ENCODE measurements at regions of chr3 and their contacts with region 1.

Region 1: GRCh38 chr3:170499565-170500156 is 81.0 kb downstream of the CLDN11 start:
- DNase-seq: peak; percentile 47
- ATAC-seq: peak; percentile 89
- H3K4me3 Mint-ChIP-seq: no peak overlapping the region
- H3K27ac Mint-ChIP-seq: no peak overlapping the region
- H3K4me1 Mint-ChIP-seq: no peaks in the 10 kb centered on the region
- H3K27me3 Mint-ChIP-seq: no peaks in the 10 kb centered on the region
- CTCF ChIP-seq: peak; percentile 46; the same call in 1 of the 2 replicates

Region 2: GRCh38 chr3:170483485-170484262 is 16.0 kb before region 1 on chr3:
- CTCF ChIA-PET with region 1: interaction called, 17 read pairs
- POLR2A ChIA-PET with region 1: interaction called, 3 read pairs
- DNase-seq: peak; percentile 44
- ATAC-seq: peak; percentile 91
- H3K4me3 Mint-ChIP-seq: no peak overlapping the region
- H3K27ac Mint-ChIP-seq: no peak overlapping the region
- H3K4me1 Mint-ChIP-seq: peaks cover 18% of the 10 kb centered on the region
- H3K27me3 Mint-ChIP-seq: no peaks in the 10 kb centered on the region; the same call in none of the 2 replicates
- CTCF ChIP-seq: peak; percentile 51

Region 3: DNA sequence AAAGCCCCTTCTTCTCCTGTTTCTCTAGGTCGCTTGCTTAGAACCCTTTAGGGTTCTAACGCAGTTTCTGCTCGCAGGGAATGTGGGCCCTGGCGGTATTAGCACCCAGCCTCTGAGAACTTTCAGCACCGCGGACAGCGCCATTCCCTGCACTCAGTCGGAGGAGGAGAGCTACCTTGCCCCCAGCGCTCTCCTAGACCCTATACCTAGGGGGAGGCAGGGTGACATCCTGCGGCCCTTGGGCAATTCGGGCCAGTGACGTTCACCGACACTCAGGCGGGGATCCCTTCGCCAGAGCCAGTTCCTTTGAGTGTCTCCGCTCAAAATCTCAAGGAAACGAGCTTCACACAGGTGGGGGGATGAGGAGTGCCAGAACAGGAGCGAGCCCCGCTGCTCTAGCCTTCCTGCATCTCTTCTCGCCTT is 84.9 kb after region 1 on chr3:
- CTCF ChIA-PET with region 1: interaction called, 18 read pairs
- POLR2A ChIA-PET with region 1: no interaction called
- DNase-seq: peak; percentile 93
- ATAC-seq: peak; percentile 88
- H3K4me3 Mint-ChIP-seq: peak overlapping the region; percentile 78
- H3K27ac Mint-ChIP-seq: no peak overlapping the region
- H3K4me1 Mint-ChIP-seq: peaks cover 10% of the 10 kb centered on the region
- H3K27me3 Mint-ChIP-seq: peaks cover 63% of the 10 kb centered on the region
- CTCF ChIP-seq: no peak

Measured in WTC11 (cell line).